ENCODE measurements at regions of chr4 and their contacts with region 1.

Region 1: GRCh38 chr4:133130171-133130570 is 18.9 kb upstream of the PCDH10 start:
- DNase-seq: peak; percentile 80
- H3K4me3 ChIP-seq: no peak overlapping the region
- H3K27ac ChIP-seq: peak overlapping the region; percentile 50
- H3K4me1 ChIP-seq: peaks cover 17% of the 10 kb centered on the region
- H3K27me3 ChIP-seq: no peaks in the 10 kb centered on the region
- CTCF ChIP-seq: no peak
- POLR2A ChIP-seq: no peak

Region 2: GRCh38 chr4:132642016-132642817 is 488.0 kb before region 1 on chr4:
- CTCF ChIA-PET with region 1: no interaction called
- POLR2A ChIA-PET with region 1: no interaction called
- dilution Hi-C with region 1: no loop called
- intact Hi-C with region 1: loop called (anchors 5 kb)
- DNase-seq: peak; percentile 74
- H3K4me3 ChIP-seq: no peak overlapping the region
- H3K27ac ChIP-seq: no peak overlapping the region
- H3K4me1 ChIP-seq: no peaks in the 10 kb centered on the region
- H3K27me3 ChIP-seq: peaks cover 0 to 1% of the 10 kb centered on the region in 2 experiments
- CTCF ChIP-seq: peak; percentile 76 to 77
- POLR2A ChIP-seq: no peak

Region 3: GRCh38 chr4:132992686-132993085 is 137.5 kb before region 1 on chr4:
- CTCF ChIA-PET with region 1: interaction called, 3 read pairs
- POLR2A ChIA-PET with region 1: no interaction called
- dilution Hi-C with region 1: no loop called
- intact Hi-C with region 1: loop called (anchors 2 kb)
- DNase-seq: peak; percentile 95
- H3K4me3 ChIP-seq: peak overlapping the region in 1 of 3 experiments; percentile 36
- H3K27ac ChIP-seq: peak overlapping the region; percentile 98
- H3K4me1 ChIP-seq: peaks cover 38% of the 10 kb centered on the region
- H3K27me3 ChIP-seq: no peaks in the 10 kb centered on the region
- CTCF ChIP-seq: no peak
- POLR2A ChIP-seq: no peak

Region 4: DNA sequence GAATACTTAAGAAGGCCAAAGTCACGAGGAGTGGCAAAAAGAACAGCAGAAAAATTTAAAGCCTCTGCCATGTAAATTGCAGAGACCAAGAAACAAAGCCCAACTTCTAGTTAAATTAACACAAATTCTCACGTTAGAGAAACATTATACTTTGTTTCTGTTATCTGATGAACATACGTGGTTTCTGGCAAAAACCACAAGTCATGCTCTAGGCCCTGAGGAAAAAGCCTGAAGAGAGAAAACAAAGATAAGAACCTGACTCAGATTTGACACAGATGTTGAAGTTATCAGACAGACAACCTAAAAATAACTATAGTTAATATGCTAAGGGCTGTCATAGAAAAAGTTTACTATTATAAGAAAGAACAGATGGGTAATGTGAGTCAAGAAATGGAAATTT is 130.2 kb before region 1 on chr4:
- CTCF ChIA-PET with region 1: no interaction called
- POLR2A ChIA-PET with region 1: no interaction called
- dilution Hi-C with region 1: no loop called
- intact Hi-C with region 1: loop called (anchors 1 kb)
- DNase-seq: peak; percentile 95
- H3K4me3 ChIP-seq: no peak overlapping the region
- H3K27ac ChIP-seq: peak overlapping the region; percentile 88
- H3K4me1 ChIP-seq: peaks cover 21% of the 10 kb centered on the region
- H3K27me3 ChIP-seq: no peaks in the 10 kb centered on the region
- CTCF ChIP-seq: no peak
- POLR2A ChIP-seq: peak; percentile 59